ENCODE measurements at regions of chr20 and their contacts with region 1.

Region 1: DNA sequence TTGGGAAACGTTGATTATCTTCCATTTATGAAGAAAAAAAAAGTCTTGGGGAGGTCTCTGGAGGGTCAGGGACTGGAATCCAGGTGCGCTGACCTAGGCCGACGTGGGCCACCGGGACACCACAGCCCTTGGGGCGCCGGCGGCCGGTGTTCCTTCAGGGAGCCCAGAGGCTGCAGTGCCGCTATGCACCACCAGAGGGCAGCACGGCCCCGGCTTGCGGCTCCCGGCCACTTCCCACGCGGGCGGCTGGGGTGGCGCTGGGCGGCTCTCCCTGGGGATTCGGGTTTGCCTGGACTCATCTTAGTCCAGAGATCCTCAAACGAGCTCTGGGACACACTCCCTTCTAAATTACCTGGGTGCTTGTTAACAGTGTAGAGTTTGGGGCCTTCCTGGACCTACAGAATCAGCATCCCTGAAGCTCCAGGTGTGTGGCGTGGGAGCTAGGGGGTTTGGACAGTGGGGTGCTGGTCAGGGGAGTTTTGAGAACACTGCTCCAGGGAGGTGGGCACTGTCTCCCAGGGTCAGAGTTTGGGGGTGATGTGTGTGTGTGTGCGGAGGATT is 23.0 kb upstream of the GTSF1L start:
- DNase-seq: peak; percentile 94
- H3K4me3 ChIP-seq: no peak overlapping the region
- H3K27ac ChIP-seq: peak overlapping the region; percentile 79 to 84 (median 80)
- H3K4me1 ChIP-seq: peaks cover 6 to 34% (median 30%) of the 10 kb centered on the region in 4 donors
- H3K27me3 ChIP-seq: peaks cover 0 to 17% (median 0%) of the 10 kb centered on the region in 4 donors
- CTCF ChIP-seq: peak in 2 of 3 experiments; percentile 99
- EP300 ChIP-seq: no peak
- POLR2A ChIP-seq: no peak

Region 2: DNA sequence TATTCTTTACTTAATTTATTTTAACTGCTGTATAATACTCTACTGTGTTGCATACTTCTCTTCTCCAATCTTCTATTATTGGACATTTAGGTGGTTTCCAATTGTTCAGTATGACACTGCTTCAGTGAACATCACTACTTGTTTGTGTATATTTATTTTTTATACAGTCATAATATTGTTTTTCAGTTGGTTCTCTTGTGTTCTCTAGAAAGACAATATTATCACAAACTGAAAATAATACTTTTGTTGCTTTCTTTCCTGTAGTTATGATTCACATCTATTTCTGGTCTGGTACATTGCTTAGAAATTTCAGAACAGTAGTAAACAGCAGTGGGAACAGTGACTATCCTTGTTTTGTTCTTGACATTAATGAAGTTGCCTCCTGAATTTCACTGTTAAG is 39.8 kb after region 1 on chr20:
- intact Hi-C with region 1: no loop called
- DNase-seq: no peak
- H3K4me3 ChIP-seq: no peak overlapping the region
- H3K27ac ChIP-seq: no peak overlapping the region
- H3K4me1 ChIP-seq: no peaks in the 10 kb centered on the region
- H3K27me3 ChIP-seq: no peaks in the 10 kb centered on the region
- CTCF ChIP-seq: no peak
- EP300 ChIP-seq: no peak
- POLR2A ChIP-seq: no peak

Region 3: GRCh38 chr20:43914311-43915210 is 164.7 kb after region 1 on chr20 and contains the start of gene TOX2:
- intact Hi-C with region 1: loop called (anchors 10 kb)
- DNase-seq: no peak
- H3K4me3 ChIP-seq: peak within 1 kb of the TSS; percentile 63 to 80 (median 68)
- H3K27ac ChIP-seq: peak within 1 kb of the TSS; percentile 76 to 83 (median 80)
- H3K4me1 ChIP-seq: peaks cover 5 to 45% (median 30%) of the 10 kb centered on the region in 4 donors
- H3K27me3 ChIP-seq: peaks cover 0 to 28% (median 0%) of the 10 kb centered on the region in 4 donors
- CTCF ChIP-seq: no peak
- EP300 ChIP-seq: no peak
- POLR2A ChIP-seq: no peak
- total RNA-seq, gene TOX2: 19.4 to 39.5 (median 32.8) TPM

Region 4: DNA sequence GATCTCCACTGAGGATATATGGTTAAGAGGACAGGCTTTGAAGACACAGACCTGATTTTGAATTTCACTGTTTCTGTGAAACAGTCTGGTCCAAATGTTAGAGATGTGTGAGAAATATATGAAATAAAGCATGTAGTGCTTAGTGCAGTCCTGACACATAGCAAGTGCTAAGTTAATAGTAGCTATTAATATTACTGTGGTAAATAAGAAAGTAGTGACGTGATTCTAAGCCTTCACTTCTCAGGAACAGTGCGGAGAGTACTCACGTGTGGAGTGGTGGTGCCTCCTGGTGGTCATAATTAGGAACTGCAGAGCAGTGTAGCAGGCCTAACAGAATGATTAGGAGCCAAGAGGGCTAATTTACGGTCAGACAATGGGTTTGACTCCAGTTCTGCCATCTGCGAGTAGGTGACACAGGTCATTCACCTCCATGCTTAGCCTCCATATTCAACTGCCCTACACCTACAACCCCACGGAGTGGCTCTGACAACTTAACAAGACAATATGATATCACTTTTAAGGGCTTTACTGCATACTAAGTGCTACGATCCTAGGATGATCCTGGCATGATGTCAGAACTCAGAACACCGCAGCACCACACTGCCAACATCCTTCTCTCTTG is 330.9 kb after region 1 on chr20:
- intact Hi-C with region 1: loop called (anchors 1 kb)
- DNase-seq: peak; percentile 92
- H3K4me3 ChIP-seq: no peak overlapping the region
- H3K27ac ChIP-seq: peak overlapping the region in 1 of 4 donors; percentile 44
- H3K4me1 ChIP-seq: peaks cover 0 to 33% (median 25%) of the 10 kb centered on the region in 4 donors
- H3K27me3 ChIP-seq: no peaks in the 10 kb centered on the region
- CTCF ChIP-seq: peak in 2 of 3 experiments; percentile 100
- EP300 ChIP-seq: no peak
- POLR2A ChIP-seq: no peak

Region 5: GRCh38 chr20:44196271-44196670 is 446.5 kb after region 1 on chr20:
- intact Hi-C with region 1: loop called (anchors 5 kb)
- DNase-seq: no peak
- H3K4me3 ChIP-seq: no peak overlapping the region
- H3K27ac ChIP-seq: no peak overlapping the region
- H3K4me1 ChIP-seq: peaks cover 16 to 32% (median 28%) of the 10 kb centered on the region in 4 donors
- H3K27me3 ChIP-seq: no peaks in the 10 kb centered on the region
- CTCF ChIP-seq: peak in 1 of 3 experiments; percentile 6
- EP300 ChIP-seq: no peak
- POLR2A ChIP-seq: no peak